ENCODE measurements at regions of chr1 and their contacts with region 1.

Region 1: GRCh38 chr1:167721617-167722151 is at the start of gene MPZL1:
- DNase-seq: peak; percentile 66 to 94 (median 80)
- ATAC-seq: peak; percentile 97 to 99 (median 98)
- H3K4me3 ChIP-seq: peak within 1 kb of the TSS; percentile 68 to 79
- H3K4me3 Mint-ChIP-seq: peak within 1 kb of the TSS; percentile 86 to 96 (median 92)
- H3K27ac ChIP-seq: no peak within 1 kb of the TSS
- H3K27ac Mint-ChIP-seq: peak within 1 kb of the TSS; percentile 78 to 86
- H3K4me1 ChIP-seq: peaks cover 14 to 19% of the 10 kb centered on the region in 2 experiments
- H3K4me1 Mint-ChIP-seq: peaks cover 48 to 61% (median 54%) of the 10 kb centered on the region in 3 donors
- H3K27me3 ChIP-seq: no peaks in the 10 kb centered on the region
- H3K27me3 Mint-ChIP-seq: no peaks in the 10 kb centered on the region
- total RNA-seq, gene MPZL1: 5.1 to 9.9 (median 8.5) TPM

Region 2: DNA sequence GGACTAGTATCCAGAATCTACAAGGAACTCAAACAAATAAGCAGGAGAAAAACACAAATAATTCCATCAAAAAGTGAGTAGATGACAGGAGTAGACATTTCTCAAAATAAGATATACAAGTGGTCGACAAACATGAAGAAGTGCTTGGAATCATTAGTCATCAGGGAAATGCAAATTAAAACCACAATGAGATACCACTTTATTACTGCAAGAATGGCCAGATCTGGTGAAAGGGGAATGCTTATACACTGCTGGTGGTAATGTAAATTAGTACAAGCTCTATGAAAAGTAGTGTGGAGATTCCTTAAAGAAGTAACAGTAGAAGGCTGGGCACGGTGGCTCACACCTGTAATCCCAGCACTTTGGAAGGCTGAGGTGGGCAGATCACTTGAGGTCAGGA is 427.2 kb before region 1 on chr1:
- CTCF ChIA-PET with region 1: no interaction called
- POLR2A ChIA-PET with region 1: interaction called in 1 of 2 experiments, 11 read pairs
- DNase-seq: no peak
- ATAC-seq: no peak
- H3K4me3 ChIP-seq: no peak overlapping the region
- H3K4me3 Mint-ChIP-seq: no peak overlapping the region
- H3K27ac ChIP-seq: no peak overlapping the region
- H3K27ac Mint-ChIP-seq: no peak overlapping the region
- H3K4me1 ChIP-seq: no peaks in the 10 kb centered on the region
- H3K4me1 Mint-ChIP-seq: peaks cover 23 to 32% (median 24%) of the 10 kb centered on the region in 3 donors
- H3K27me3 ChIP-seq: no peaks in the 10 kb centered on the region
- H3K27me3 Mint-ChIP-seq: no peaks in the 10 kb centered on the region